Caco-2 (cell line): ENCODE measurements at regions of chr20 and their contacts with region 1.

Region 1: GRCh38 chr20:44291754-44292153 is 19.2 kb downstream of the FITM2 start:
- DNase-seq: peak; percentile 53 to 63
- H3K4me3 ChIP-seq: no peak overlapping the region
- H3K4me3 Mint-ChIP-seq: no peak overlapping the region
- H3K27ac Mint-ChIP-seq: no peak overlapping the region
- H3K4me1 ChIP-seq: no peaks in the 10 kb centered on the region
- H3K4me1 Mint-ChIP-seq: no peaks in the 10 kb centered on the region
- H3K27me3 ChIP-seq: no peaks in the 10 kb centered on the region
- H3K27me3 Mint-ChIP-seq: no peaks in the 10 kb centered on the region
- CTCF ChIP-seq: no peak

Region 2: GRCh38 chr20:44231713-44232468 is 59.9 kb before region 1 on chr20:
- CTCF ChIA-PET with region 1: no interaction called
- POLR2A ChIA-PET with region 1: no interaction called
- intact Hi-C with region 1: no loop called
- DNase-seq: peak; percentile 48 to 51
- H3K4me3 ChIP-seq: no peak overlapping the region
- H3K4me3 Mint-ChIP-seq: no peak overlapping the region
- H3K27ac Mint-ChIP-seq: no peak overlapping the region
- H3K4me1 ChIP-seq: no peaks in the 10 kb centered on the region
- H3K4me1 Mint-ChIP-seq: peaks cover 12% of the 10 kb centered on the region
- H3K27me3 ChIP-seq: no peaks in the 10 kb centered on the region
- H3K27me3 Mint-ChIP-seq: no peaks in the 10 kb centered on the region
- CTCF ChIP-seq: peak in 1 of 2 experiments; percentile 22

Region 3: GRCh38 chr20:44319756-44320422 is 28.1 kb after region 1 on chr20:
- CTCF ChIA-PET with region 1: no interaction called
- POLR2A ChIA-PET with region 1: no interaction called
- intact Hi-C with region 1: no loop called
- DNase-seq: no peak
- H3K4me3 ChIP-seq: no peak overlapping the region
- H3K4me3 Mint-ChIP-seq: no peak overlapping the region
- H3K27ac Mint-ChIP-seq: no peak overlapping the region
- H3K4me1 ChIP-seq: no peaks in the 10 kb centered on the region
- H3K4me1 Mint-ChIP-seq: no peaks in the 10 kb centered on the region
- H3K27me3 ChIP-seq: no peaks in the 10 kb centered on the region
- H3K27me3 Mint-ChIP-seq: no peaks in the 10 kb centered on the region
- CTCF ChIP-seq: no peak

Region 4: GRCh38 chr20:44570367-44570766 is 278.6 kb after region 1 on chr20:
- CTCF ChIA-PET with region 1: no interaction called
- POLR2A ChIA-PET with region 1: no interaction called
- intact Hi-C with region 1: loop called (anchors 1 kb)
- DNase-seq: no peak
- H3K4me3 ChIP-seq: no peak overlapping the region
- H3K4me3 Mint-ChIP-seq: no peak overlapping the region
- H3K27ac Mint-ChIP-seq: no peak overlapping the region
- H3K4me1 ChIP-seq: 0 out of 2 replicates have a peak, but pooled peaks cover 9% of the 10 kb centered on the region
- H3K4me1 Mint-ChIP-seq: peaks cover 12% of the 10 kb centered on the region
- H3K27me3 ChIP-seq: no peaks in the 10 kb centered on the region
- H3K27me3 Mint-ChIP-seq: no peaks in the 10 kb centered on the region
- CTCF ChIP-seq: no peak